ENCODE measurements at regions of chr14 and their contacts with region 1.

Region 1: DNA sequence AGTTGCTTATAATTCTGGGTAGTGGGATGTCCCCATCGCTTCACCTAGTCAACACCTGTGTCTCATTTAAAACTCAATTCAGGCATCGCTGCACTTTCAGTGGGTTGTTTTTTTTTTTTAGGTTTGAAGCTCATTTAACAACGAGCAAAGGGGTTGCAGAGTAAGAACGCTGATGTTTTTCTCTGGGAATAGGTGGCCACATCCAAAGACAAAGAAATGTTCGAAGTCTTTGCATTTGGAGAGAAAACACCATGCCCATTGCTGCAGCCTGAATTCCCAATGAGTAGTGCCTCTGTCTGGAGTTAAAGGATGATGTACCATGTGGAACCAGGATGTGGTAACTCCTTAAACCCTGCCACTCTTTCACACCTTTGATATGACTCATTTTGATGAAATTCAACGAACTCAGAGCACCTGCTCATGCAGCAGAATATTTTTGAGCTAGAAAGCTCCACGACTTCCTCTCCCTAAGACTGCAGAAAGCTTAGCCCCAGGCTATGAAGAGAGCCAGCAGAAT is 35.1 kb upstream of the BATF start:
- DNase-seq: no peak
- ATAC-seq: peak; percentile 20
- H3K4me3 ChIP-seq: no peak overlapping the region
- H3K4me3 Mint-ChIP-seq: peak overlapping the region in 1 of 10 donors; percentile 65
- H3K27ac ChIP-seq: no peak overlapping the region
- H3K27ac Mint-ChIP-seq: peak overlapping the region in 2 of 9 donors; percentile 38 to 47
- H3K4me1 ChIP-seq: peaks cover 0 to 9% of the 10 kb centered on the region in 2 donors
- H3K4me1 Mint-ChIP-seq: peaks cover 4 to 31% (median 8%) of the 10 kb centered on the region in 7 donors
- H3K27me3 ChIP-seq: no peaks in the 10 kb centered on the region
- H3K27me3 Mint-ChIP-seq: peaks cover 0 to 2% (median 0%) of the 10 kb centered on the region in 5 donors

Region 2: GRCh38 chr14:74217672-74218448 is 1269.4 kb before region 1 on chr14:
- CTCF ChIA-PET with region 1: no interaction called
- POLR2A ChIA-PET with region 1: no interaction called
- intact Hi-C with region 1: no loop called
- DNase-seq: peak; percentile 41 to 78 (median 59)
- ATAC-seq: peak; percentile 91
- H3K4me3 ChIP-seq: peak overlapping the region; percentile 36
- H3K4me3 Mint-ChIP-seq: peak overlapping the region in 8 of 10 donors; percentile 12 to 64 (median 54)
- H3K27ac ChIP-seq: no peak overlapping the region
- H3K27ac Mint-ChIP-seq: peak overlapping the region in 1 of 9 donors; percentile 36
- H3K4me1 ChIP-seq: peaks cover 0 to 6% of the 10 kb centered on the region in 2 donors
- H3K4me1 Mint-ChIP-seq: peaks cover 0 to 5% (median 0%) of the 10 kb centered on the region in 7 donors
- H3K27me3 ChIP-seq: no peaks in the 10 kb centered on the region
- H3K27me3 Mint-ChIP-seq: peaks cover 7 to 26% (median 13%) of the 10 kb centered on the region in 5 donors

Region 3: DNA sequence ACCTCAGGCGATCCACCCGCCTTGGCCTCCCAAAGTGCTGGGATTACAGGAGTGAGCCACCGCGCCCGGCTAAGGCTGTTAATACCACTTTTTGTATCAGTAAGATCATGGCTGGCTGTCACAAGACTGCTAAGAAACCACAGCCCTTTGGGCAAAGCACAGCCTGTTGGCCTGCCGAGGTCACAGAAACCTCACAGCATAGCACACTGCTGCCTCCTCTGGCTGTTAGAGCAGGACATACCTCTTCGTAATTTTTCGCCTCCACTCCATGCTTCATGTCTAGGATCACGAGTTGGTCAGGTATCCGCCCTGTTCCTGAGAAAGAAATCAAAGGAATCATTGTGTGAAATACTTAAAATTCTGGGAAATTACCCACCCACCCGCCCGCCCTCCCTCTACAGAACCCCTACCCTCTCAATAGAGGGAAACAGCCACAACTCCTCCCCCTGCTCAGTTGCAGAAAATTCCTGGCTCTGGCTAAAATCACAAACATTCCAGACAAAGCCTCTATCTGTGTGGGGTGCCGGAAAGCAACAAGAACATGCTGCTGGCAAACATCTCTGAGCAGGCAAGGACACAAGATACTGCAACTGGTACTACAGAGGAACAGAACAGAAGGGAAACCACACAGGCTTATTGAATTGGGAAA is 339.7 kb before region 1 on chr14:
- CTCF ChIA-PET with region 1: no interaction called
- POLR2A ChIA-PET with region 1: no interaction called
- intact Hi-C with region 1: loop called in 1 of 2 experiments (anchors 5 kb)
- DNase-seq: no peak
- ATAC-seq: peak; percentile 85
- H3K4me3 ChIP-seq: no peak overlapping the region
- H3K4me3 Mint-ChIP-seq: peak overlapping the region in 1 of 10 donors; percentile 26
- H3K27ac ChIP-seq: no peak overlapping the region
- H3K27ac Mint-ChIP-seq: peak overlapping the region in 4 of 9 donors; percentile 21 to 84 (median 56)
- H3K4me1 ChIP-seq: peaks cover 0 to 18% of the 10 kb centered on the region in 2 donors
- H3K4me1 Mint-ChIP-seq: peaks cover 38 to 78% (median 64%) of the 10 kb centered on the region in 7 donors
- H3K27me3 ChIP-seq: no peaks in the 10 kb centered on the region
- H3K27me3 Mint-ChIP-seq: no peaks in the 10 kb centered on the region

Region 4: GRCh38 chr14:75333606-75334548 is 153.3 kb before region 1 on chr14:
- CTCF ChIA-PET with region 1: interaction called, 4 read pairs
- POLR2A ChIA-PET with region 1: no interaction called
- intact Hi-C with region 1: loop called in 1 of 2 experiments (anchors 1 kb)
- DNase-seq: peak; percentile 36 to 80 (median 72)
- ATAC-seq: peak; percentile 94
- H3K4me3 ChIP-seq: peak overlapping the region; percentile 71
- H3K4me3 Mint-ChIP-seq: peak overlapping the region; percentile 84 to 93 (median 88)
- H3K27ac ChIP-seq: peak overlapping the region; percentile 77
- H3K27ac Mint-ChIP-seq: peak overlapping the region; percentile 90 to 99 (median 98)
- H3K4me1 ChIP-seq: peaks cover 12 to 14% of the 10 kb centered on the region in 2 donors
- H3K4me1 Mint-ChIP-seq: peaks cover 20 to 42% (median 28%) of the 10 kb centered on the region in 7 donors
- H3K27me3 ChIP-seq: no peaks in the 10 kb centered on the region
- H3K27me3 Mint-ChIP-seq: peaks cover 0 to 18% (median 0%) of the 10 kb centered on the region in 5 donors

Region 5: GRCh38 chr14:75427482-75428229 is 59.6 kb before region 1 on chr14 and contains the start of gene JDP2:
- CTCF ChIA-PET with region 1: no interaction called
- POLR2A ChIA-PET with region 1: no interaction called
- intact Hi-C with region 1: loop called in 1 of 2 experiments (anchors 5 kb)
- DNase-seq: peak; percentile 19 to 57 (median 43)
- ATAC-seq: peak; percentile 80
- H3K4me3 ChIP-seq: peak within 1 kb of the TSS; percentile 41
- H3K4me3 Mint-ChIP-seq: peak within 1 kb of the TSS; percentile 55 to 92 (median 76)
- H3K27ac ChIP-seq: no peak within 1 kb of the TSS
- H3K27ac Mint-ChIP-seq: peak within 1 kb of the TSS in 1 of 9 donors; percentile 70
- H3K4me1 ChIP-seq: no peaks in the 10 kb centered on the region
- H3K4me1 Mint-ChIP-seq: peaks cover 0 to 17% (median 8%) of the 10 kb centered on the region in 7 donors
- H3K27me3 ChIP-seq: no peaks in the 10 kb centered on the region
- H3K27me3 Mint-ChIP-seq: peaks cover 5 to 37% (median 20%) of the 10 kb centered on the region in 5 donors
- total RNA-seq, gene JDP2: 0.86 to 29.0 (median 1.5) TPM

Region 6: DNA sequence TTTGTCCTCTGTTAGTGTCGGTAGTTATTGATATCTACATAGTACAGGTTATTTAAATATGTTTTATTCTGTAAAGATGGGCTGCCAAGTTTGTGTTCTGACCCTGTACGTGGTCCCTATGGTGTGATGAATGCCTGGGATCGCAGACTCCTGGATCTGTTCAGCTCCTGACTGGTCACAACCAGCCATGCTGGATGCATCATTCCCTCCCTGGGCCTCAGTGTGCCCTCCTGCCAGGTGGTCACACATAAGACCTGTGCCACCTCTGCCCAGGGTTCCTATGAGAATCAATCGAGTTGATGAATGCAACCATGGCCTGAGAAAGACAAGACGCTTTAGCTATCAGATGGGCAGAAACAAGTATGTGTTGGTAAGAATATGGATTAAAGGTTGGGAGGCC is 14.5 kb before region 1 on chr14:
- CTCF ChIA-PET with region 1: no interaction called
- POLR2A ChIA-PET with region 1: no interaction called
- intact Hi-C with region 1: no loop called
- DNase-seq: no peak
- ATAC-seq: no peak
- H3K4me3 ChIP-seq: no peak overlapping the region
- H3K4me3 Mint-ChIP-seq: no peak overlapping the region
- H3K27ac ChIP-seq: no peak overlapping the region
- H3K27ac Mint-ChIP-seq: no peak overlapping the region
- H3K4me1 ChIP-seq: no peaks in the 10 kb centered on the region
- H3K4me1 Mint-ChIP-seq: no peaks in the 10 kb centered on the region
- H3K27me3 ChIP-seq: no peaks in the 10 kb centered on the region
- H3K27me3 Mint-ChIP-seq: peaks cover 0 to 9% (median 0%) of the 10 kb centered on the region in 5 donors

Region 7: GRCh38 chr14:75560962-75561432 is 73.8 kb after region 1 on chr14:
- CTCF ChIA-PET with region 1: interaction called, 9 read pairs
- POLR2A ChIA-PET with region 1: no interaction called
- intact Hi-C with region 1: loop called (anchors 1 to 2 kb)
- DNase-seq: peak in 4 of 9 donors; percentile 19 to 54 (median 28)
- ATAC-seq: peak; percentile 82
- H3K4me3 ChIP-seq: no peak overlapping the region
- H3K4me3 Mint-ChIP-seq: peak overlapping the region in 7 of 10 donors; percentile 18 to 77 (median 40)
- H3K27ac ChIP-seq: no peak overlapping the region
- H3K27ac Mint-ChIP-seq: peak overlapping the region in 6 of 9 donors; percentile 12 to 68 (median 48)
- H3K4me1 ChIP-seq: peaks cover 4 to 8% of the 10 kb centered on the region in 2 donors
- H3K4me1 Mint-ChIP-seq: peaks cover 17 to 62% (median 39%) of the 10 kb centered on the region in 7 donors
- H3K27me3 ChIP-seq: no peaks in the 10 kb centered on the region
- H3K27me3 Mint-ChIP-seq: no peaks in the 10 kb centered on the region

Region 8: DNA sequence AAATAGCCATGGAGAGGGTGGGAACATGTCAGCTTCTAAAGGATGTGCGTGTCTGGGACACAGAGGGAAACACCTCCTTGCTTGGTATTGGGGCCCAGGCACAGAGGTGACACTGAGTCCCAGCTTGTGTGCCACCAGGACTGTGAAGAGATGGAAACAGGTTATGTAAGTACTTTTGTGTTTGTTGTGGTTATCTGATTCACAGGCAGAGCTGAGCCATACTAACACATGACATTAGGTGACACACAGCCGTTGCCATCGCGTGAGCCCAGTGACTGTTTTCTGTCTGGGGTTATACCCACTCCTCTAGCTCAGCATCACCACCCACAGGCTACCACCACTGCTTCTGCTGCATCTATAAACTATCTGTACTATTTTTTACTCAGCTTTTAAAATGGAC is 79.1 kb after region 1 on chr14:
- CTCF ChIA-PET with region 1: interaction called, 9 read pairs
- POLR2A ChIA-PET with region 1: no interaction called
- intact Hi-C with region 1: loop called (anchors 1 to 2 kb)
- DNase-seq: peak in 7 of 9 donors; percentile 41 to 78 (median 63)
- ATAC-seq: peak; percentile 91
- H3K4me3 ChIP-seq: no peak overlapping the region
- H3K4me3 Mint-ChIP-seq: peak overlapping the region in 7 of 10 donors; percentile 7 to 61 (median 45)
- H3K27ac ChIP-seq: peak overlapping the region; percentile 22
- H3K27ac Mint-ChIP-seq: peak overlapping the region; percentile 69 to 96 (median 87)
- H3K4me1 ChIP-seq: peaks cover 3 to 6% of the 10 kb centered on the region in 2 donors
- H3K4me1 Mint-ChIP-seq: peaks cover 13 to 53% (median 34%) of the 10 kb centered on the region in 7 donors
- H3K27me3 ChIP-seq: no peaks in the 10 kb centered on the region
- H3K27me3 Mint-ChIP-seq: no peaks in the 10 kb centered on the region

Region 9: DNA sequence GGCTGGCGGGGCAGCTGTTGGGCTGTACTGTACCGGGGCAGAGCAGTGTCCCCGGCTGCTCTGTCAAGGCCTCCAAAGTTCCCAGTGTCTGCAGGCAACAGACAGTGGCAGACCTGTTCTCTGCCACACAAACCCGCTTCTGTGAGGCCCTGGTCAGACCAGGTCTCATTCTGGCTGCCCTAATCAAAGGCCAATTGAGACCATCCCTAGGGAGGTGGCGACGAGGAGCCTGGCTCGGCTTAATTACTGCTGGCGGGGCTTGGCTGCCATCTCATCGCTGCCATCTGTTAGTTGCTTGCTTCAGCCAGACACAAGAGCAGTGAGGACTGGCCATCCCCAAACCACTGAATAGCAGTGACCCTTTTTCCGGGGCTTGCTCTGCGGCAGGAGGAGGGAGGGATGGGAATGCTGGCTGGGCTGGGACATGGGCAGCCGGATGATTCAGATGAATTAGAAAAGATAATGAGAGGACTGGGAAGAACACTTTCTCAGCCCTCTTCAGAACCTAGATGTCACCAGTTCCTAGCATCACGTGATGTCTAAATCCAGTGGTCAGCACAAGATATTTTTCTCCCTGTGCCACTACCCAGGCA is 149.0 kb after region 1 on chr14:
- CTCF ChIA-PET with region 1: no interaction called
- POLR2A ChIA-PET with region 1: no interaction called
- intact Hi-C with region 1: no loop called
- DNase-seq: no peak
- ATAC-seq: no peak
- H3K4me3 ChIP-seq: no peak overlapping the region
- H3K4me3 Mint-ChIP-seq: no peak overlapping the region
- H3K27ac ChIP-seq: no peak overlapping the region
- H3K27ac Mint-ChIP-seq: no peak overlapping the region
- H3K4me1 ChIP-seq: no peaks in the 10 kb centered on the region
- H3K4me1 Mint-ChIP-seq: peaks cover 0 to 3% (median 0%) of the 10 kb centered on the region in 7 donors
- H3K27me3 ChIP-seq: no peaks in the 10 kb centered on the region
- H3K27me3 Mint-ChIP-seq: no peaks in the 10 kb centered on the region

Measured in naive thymus-derived CD4-positive, alpha-beta T cell (primary cell).